Astrocyte of the cerebellum (primary cell): ENCODE measurements at regions of chr2 and their contacts with region 1.

Region 1: DNA sequence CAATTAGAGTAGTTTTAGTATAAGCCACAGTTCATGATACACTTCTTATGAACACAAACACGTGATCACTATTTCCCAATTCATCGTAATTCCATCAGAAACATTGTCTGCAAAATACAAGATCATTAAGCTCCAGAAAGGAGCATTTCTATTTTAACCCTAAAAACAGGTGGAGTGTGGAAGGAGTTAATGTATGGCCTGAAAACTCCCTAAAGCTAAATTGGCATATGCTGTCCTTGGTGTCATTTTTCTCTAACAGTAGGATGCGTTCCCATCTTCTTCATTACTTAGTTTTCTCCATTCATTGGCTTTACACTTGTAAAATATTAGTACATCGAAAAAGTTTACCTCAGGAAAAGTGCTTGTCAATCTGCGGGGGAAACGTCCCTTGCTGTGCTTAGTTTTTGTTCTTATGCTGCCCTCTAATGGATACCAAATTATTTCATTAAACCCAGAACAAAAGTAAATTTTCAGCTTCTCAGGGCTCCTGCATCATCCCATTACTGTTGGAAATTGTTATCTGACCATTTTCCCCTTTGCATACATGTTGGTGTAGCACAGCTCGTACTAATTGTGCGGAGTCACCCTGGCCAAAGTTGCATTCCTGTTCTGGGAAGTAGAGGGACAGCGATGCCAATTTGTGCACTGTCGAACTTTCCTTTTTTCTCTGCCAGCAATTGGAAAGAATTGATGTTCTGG is 153.4 kb downstream of the GPD2 start:
- DNase-seq: peak; percentile 53
- H3K4me3 ChIP-seq: no peak overlapping the region
- CTCF ChIP-seq: peak; percentile 56

Region 2: GRCh38 chr2:155377266-155377680 is 1212.3 kb before region 1 on chr2:
- in situ Hi-C with region 1: loop called (anchors 25 kb)
- DNase-seq: peak; percentile 18
- H3K4me3 ChIP-seq: no peak overlapping the region
- CTCF ChIP-seq: no peak

Region 3: DNA sequence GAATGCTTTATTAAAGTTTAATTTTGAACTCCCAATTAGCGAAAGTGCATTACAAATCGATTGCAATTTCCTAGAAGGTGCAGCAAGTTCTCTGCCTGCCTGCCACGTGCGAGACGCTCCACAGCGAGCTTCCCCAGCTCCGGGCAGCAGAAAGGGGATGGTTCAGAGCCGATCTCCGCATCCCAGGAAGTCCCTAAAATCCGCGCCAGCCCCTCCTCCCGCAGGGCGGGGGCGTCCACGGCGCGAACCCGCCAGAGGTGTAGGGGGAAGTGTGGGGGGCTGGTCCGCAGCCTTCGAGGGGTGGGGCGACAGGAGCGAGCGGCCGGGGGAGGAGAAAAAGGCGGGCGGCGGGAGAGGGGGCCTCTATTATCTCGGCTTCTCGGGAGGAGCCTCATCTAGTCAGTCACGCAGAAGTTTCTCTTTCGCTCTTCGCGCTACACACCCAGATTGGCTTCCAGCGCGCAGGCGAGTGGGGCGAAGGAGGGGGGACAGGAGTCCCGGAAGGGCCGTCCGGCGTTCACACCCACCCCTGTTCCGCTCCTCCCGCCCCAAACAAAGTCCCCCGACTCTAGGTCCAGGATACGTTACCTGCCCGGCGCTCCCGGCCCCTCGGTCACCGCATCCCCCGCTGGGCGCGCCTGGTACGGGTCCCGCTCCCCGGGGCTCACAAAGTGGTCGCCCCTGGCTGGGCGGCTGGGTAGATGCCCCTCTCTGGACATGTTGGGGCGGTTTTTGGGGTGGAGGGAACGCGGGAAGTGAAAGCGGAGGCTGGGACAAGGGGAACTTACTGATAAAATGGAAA is 247.9 kb before region 1 on chr2:
- in situ Hi-C with region 1: loop called (anchors 5 kb)
- DNase-seq: peak; percentile 88
- H3K4me3 ChIP-seq: peak overlapping the region; percentile 78
- CTCF ChIP-seq: no peak

Region 4: DNA sequence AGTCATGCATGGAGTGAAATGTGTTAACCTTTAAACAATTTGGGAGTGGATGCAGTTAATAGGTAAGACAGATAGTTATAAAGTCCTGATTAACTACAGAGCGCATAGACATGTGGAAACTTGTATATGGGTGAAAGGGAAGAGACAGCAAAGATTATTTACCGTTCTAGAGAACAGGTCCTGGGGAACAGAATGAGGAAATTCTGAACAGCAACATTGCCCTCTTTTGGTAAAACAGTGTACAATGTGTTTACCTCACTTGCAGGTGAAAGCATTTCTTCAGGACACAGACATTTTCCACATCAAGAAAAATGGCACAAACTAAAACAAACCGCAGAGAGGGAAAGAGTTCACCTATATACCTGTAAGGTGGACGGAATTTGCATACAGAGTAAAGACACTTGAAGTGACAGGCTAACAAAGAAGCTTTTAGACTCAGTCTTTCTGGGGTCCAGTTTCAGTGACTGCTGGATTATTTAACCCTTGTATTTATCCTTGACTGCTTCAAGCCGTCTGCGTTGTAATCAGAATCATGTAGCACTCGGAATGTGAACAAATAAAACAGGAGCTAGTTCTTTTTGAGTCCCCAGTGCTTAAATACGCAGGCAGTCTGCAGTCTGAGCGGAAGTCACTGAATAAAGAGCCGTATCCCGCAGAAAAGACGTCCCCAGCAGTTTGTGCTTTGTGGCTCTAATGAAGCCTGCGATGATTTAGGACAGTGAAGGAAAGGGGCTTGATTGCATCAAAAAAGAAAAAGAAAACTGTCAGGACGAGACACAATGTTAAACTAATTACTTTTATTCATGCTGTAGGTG is 303.1 kb after region 1 on chr2:
- in situ Hi-C with region 1: loop called (anchors 10 kb)
- DNase-seq: peak; percentile 35
- H3K4me3 ChIP-seq: peak overlapping the region; percentile 34
- CTCF ChIP-seq: peak; percentile 55